ENCODE measurements at regions of chr1 and their contacts with region 1.

Region 1: DNA sequence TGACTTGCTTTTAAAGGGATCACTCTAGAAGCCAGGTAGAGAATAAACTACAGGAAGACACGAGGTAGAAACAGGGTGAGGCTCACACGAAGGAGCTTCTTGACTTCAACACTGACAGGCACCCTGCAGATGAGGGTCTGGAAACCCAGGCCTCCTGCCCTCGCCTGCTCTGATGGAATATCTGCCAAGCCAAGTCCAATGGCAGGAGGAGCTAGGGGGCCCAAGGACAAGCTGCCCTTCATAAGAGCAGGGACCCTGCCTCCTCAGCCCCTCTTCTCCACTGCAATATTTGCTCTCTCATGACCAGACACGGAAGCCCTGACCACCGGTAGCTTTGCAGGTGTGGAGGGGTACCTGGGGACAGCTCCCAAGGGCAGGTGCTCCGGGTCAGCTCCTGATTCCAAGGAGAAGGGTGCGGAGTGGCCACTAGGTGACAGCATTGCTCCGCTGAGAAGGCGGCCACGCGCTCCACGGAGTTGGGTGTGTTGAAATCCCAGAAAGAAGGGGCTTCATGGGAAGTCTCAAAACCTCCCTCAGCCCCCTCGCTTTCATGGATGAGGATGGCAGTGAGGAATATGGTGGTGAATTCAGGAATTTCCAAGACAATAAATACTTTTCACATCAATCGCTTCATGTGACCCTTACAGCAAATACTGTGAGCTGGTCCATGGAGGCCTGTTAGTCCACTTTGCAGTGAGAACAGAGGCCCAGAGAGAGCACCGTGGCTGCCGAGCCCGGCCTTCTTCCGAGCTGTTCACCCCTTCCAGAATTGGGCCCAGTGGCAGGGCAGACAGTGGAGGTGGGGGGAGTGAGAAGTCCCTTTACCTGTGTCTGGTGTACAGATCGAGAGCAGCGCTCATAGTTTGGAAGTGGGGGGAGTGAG is 33.2 kb upstream of the PAX7 start:
- DNase-seq: peak; percentile 88
- ATAC-seq: peak; percentile 91
- H3K4me3 Mint-ChIP-seq: no peak overlapping the region
- H3K27ac Mint-ChIP-seq: no peak overlapping the region
- H3K4me1 Mint-ChIP-seq: peaks cover 12% of the 10 kb centered on the region
- H3K27me3 Mint-ChIP-seq: peaks cover 22% of the 10 kb centered on the region
- CTCF ChIP-seq: peak; percentile 91

Region 2: DNA sequence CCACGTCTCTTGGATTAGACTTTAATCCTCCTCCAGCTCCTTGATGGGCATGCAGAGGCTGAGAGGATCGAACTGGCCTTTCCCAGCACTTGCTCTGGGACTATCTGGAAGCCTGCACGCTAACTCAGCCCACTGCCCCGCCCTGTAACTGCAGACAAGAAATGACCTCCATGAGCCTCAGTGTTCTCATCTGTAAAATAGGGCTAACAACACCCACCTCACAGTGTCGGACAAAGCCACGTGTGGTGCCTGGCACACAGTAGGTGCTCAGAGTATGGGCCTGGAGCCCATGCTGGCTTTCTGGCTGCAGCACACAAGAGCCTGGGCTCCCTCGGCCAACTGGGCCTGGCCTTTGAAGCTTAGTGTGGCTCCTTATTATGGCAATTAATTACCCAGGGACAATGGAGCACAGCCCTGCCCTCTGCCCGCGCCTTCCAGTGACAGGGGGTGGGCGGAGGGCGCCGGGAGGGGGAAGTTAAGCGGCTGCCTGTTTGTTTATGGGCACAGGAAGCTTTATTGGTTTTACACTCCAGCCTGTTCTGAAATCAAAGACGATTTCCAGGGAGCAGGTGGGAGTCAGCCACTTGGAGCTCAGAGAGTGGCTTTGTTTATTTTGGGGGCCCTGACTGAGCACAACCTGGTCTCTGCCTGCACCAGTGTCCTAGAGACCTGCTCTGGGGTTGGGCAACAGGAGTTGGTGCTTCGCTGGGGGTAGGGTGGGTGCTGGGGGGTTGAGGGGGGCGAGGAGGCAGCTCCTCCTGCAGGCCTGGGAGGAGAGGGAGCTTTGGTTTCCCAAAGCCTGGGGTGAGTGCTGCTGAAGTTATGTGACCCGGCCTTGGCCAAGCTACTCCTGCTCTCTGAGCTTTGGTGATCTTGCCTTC is 64.2 kb after region 1 on chr1:
- CTCF ChIA-PET with region 1: interaction called, 13 read pairs
- POLR2A ChIA-PET with region 1: no interaction called
- DNase-seq: no peak
- ATAC-seq: 0 out of 2 replicates have a peak, but pooled peaks have one; percentile 18
- H3K4me3 Mint-ChIP-seq: no peak overlapping the region
- H3K27ac Mint-ChIP-seq: no peak overlapping the region
- H3K4me1 Mint-ChIP-seq: peaks cover 39% of the 10 kb centered on the region
- H3K27me3 Mint-ChIP-seq: peaks cover 63% of the 10 kb centered on the region
- CTCF ChIP-seq: no peak

Region 3: DNA sequence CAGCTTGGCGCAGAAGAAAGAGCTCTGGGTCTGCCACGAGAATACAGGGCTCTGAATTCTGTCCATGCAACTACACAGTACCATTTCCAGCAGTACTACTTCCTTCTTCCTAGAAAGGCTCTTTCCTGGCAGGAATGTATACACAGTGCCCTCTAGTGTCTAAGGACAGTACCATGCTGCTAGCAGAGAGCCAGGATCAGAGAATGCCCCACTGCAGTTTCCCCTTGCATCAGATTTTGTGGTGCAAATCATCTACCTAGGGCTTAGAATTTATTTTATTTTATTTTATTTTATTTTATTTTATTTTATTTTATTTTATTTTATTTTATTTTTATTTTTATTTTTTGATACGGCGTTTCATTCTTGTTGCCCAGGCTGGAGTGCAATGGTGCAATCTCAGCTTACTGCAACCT is 84.0 kb after region 1 on chr1:
- CTCF ChIA-PET with region 1: interaction called, 102 read pairs
- POLR2A ChIA-PET with region 1: no interaction called
- DNase-seq: no peak
- ATAC-seq: peak; percentile 68
- H3K4me3 Mint-ChIP-seq: no peak overlapping the region
- H3K27ac Mint-ChIP-seq: no peak overlapping the region
- H3K4me1 Mint-ChIP-seq: peaks cover 21% of the 10 kb centered on the region
- H3K27me3 Mint-ChIP-seq: peaks cover 59% of the 10 kb centered on the region
- CTCF ChIP-seq: peak; percentile 64; the same call in 1 of the 2 replicates

Region 4: DNA sequence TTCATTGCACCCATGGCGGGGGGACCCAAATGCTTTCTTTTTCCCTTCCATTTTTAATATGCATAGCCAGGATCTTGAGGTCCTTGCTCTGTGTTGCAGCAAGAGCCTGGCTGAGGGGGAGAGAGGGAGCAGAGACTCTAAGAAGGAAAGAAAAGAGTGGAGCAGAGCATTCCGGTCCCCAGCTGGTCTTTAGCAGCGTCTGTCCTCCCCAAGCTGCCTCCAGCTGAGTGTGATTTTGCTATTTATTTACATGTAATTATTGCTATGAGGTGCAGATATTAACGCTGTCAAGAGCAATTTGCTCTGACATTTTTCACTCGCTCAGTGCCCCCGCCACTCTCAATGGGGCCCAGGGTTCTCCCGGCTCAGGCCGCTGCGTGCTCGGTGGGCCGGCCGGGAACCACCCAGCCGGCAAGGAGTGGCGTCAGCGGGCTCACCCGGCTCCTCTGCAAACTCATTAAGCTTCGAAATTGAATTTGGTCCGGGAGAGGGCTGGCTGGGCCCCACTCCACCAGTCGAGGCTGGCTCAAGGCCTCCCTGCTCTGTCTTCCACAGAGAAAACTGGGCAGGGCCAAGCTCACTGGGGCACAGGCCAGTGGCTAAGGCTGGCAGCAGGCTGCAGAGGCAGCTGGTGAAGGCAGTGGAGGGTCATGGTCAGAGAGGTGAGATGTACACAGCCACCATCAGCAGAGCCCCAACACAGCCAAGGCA is 126.5 kb after region 1 on chr1:
- CTCF ChIA-PET with region 1: interaction called, 16 read pairs
- POLR2A ChIA-PET with region 1: no interaction called
- DNase-seq: no peak
- ATAC-seq: no peak; the same call in 1 of the 2 replicates
- H3K4me3 Mint-ChIP-seq: no peak overlapping the region
- H3K27ac Mint-ChIP-seq: no peak overlapping the region
- H3K4me1 Mint-ChIP-seq: peaks cover 19% of the 10 kb centered on the region
- H3K27me3 Mint-ChIP-seq: peaks cover 39% of the 10 kb centered on the region
- CTCF ChIP-seq: no peak

Region 5: DNA sequence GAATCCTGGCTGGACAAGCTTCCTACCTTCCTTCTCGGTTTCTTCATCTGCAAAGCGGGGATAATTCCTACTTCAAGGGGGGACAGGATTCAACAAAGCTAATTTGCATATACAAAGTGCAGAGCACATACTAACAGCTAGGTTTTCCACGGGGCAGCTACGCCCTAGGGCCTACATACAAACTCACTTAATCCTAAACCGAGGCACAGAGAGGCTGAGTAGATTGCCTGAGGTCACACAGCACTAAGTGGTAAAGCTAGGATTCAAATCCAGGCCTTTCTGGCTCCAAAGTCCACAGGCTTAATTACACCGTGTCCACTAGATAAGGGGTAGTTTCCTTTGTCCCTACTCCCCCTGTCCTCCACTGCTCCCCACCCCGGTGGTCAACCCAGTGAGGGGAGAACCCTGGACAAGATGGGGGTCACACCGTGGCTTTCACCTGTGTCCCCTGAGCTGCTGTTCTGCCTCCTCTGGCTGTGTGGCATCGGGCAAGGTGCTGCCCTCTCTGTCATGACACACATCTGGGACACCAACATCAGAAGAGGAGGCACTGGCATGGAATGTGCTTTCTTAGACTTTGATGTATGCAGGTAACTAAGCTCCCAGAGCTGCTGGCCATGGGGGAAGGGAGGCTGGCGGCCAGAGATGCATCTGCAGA is 217.6 kb after region 1 on chr1:
- CTCF ChIA-PET with region 1: interaction called, 120 read pairs
- POLR2A ChIA-PET with region 1: no interaction called
- DNase-seq: no peak
- ATAC-seq: no peak
- H3K4me3 Mint-ChIP-seq: no peak overlapping the region
- H3K27ac Mint-ChIP-seq: no peak overlapping the region
- H3K4me1 Mint-ChIP-seq: peaks cover 18% of the 10 kb centered on the region
- H3K27me3 Mint-ChIP-seq: peaks cover 3% of the 10 kb centered on the region
- CTCF ChIP-seq: no peak

Region 6: DNA sequence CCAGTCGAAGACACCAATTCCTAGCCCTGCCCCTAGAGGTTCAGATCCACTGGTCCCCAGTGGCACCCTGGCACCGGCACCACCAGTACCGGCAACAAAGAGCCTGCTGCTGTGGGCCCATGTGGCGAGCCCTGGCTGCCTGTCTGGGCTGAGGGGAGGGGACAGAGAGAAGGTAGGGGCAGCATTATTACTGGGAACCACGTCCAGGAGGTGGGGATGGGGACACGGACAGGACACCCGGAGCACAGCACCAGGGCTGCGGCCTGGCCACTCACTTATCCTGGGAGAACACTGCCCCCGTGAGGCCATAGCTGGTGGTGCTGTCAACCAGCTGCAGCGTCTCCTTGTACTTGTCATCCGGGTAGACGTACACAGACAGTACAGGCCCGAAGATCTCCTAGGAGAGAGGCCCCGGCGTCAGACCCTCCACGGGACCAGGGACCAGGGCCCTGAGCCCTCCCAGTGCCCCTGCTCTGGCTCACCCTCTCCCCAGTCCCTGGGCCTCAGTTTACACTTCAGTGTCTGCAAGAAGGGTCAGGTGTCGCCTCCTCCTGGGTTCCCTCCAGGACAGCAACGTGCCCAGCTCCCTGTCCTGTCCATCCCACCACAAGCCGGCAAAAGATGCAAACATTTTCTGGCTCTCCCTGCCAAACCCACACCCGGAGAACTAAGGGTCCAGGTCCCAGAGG is 277.9 kb after region 1 on chr1:
- CTCF ChIA-PET with region 1: interaction called, 39 read pairs
- POLR2A ChIA-PET with region 1: no interaction called
- DNase-seq: peak; percentile 95
- ATAC-seq: peak; percentile 89
- H3K4me3 Mint-ChIP-seq: no peak overlapping the region
- H3K27ac Mint-ChIP-seq: no peak overlapping the region
- H3K4me1 Mint-ChIP-seq: no peaks in the 10 kb centered on the region; the same call in 1 of the 2 replicates
- H3K27me3 Mint-ChIP-seq: no peaks in the 10 kb centered on the region
- CTCF ChIP-seq: peak; percentile 93

Region 7: GRCh38 chr1:18926315-18927081 is 329.1 kb after region 1 on chr1:
- CTCF ChIA-PET with region 1: no interaction called
- POLR2A ChIA-PET with region 1: no interaction called
- DNase-seq: no peak
- ATAC-seq: no peak
- H3K4me3 Mint-ChIP-seq: no peak overlapping the region
- H3K27ac Mint-ChIP-seq: no peak overlapping the region
- H3K4me1 Mint-ChIP-seq: peaks cover 27% of the 10 kb centered on the region
- H3K27me3 Mint-ChIP-seq: no peaks in the 10 kb centered on the region
- CTCF ChIP-seq: no peak